ENCODE measurements at regions of chr1 and their contacts with region 1.

Region 1: GRCh38 chr1:171515299-171515698 is 30.0 kb downstream of the PRRC2C start:
- DNase-seq: no peak
- H3K4me3 ChIP-seq: no peak overlapping the region
- H3K27ac ChIP-seq: no peak overlapping the region
- H3K4me1 ChIP-seq: no peaks in the 10 kb centered on the region
- H3K27me3 ChIP-seq: no peaks in the 10 kb centered on the region
- CTCF ChIP-seq: no peak

Region 2: GRCh38 chr1:170692866-170693575 is 822.3 kb before region 1 on chr1:
- CTCF ChIA-PET with region 1: interaction called, 10 read pairs
- POLR2A ChIA-PET with region 1: no interaction called
- intact Hi-C with region 1: no loop called
- DNase-seq: no peak
- H3K4me3 ChIP-seq: no peak overlapping the region
- H3K27ac ChIP-seq: no peak overlapping the region
- H3K4me1 ChIP-seq: no peaks in the 10 kb centered on the region
- H3K27me3 ChIP-seq: no peaks in the 10 kb centered on the region
- CTCF ChIP-seq: no peak